OCI-LY7 (cell line): ENCODE measurements at regions of chr2 and their contacts with region 1.

Region 1: DNA sequence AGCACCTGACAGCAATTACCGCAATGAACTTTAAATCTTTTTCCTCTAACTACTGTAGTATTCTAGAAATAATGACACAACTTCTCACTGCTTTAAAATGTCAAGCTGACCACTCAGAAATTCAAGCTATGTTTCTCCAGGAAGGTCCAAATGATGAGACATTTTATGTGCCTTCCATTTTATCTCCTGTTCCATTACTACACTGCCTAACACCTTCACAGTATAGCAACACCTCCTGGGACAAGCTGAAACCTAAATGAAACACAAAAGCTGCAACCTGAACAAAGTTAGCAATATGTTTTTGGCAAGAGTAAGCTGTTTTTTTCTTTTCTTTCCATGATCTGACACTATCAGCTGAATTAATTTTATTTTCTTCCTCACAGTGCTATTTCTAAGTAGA is 81.9 kb downstream of the IKZF2 start:
- DNase-seq: no peak
- H3K4me3 ChIP-seq: no peak overlapping the region
- H3K27ac ChIP-seq: no peak overlapping the region
- H3K4me1 ChIP-seq: no peaks in the 10 kb centered on the region
- CTCF ChIP-seq: no peak

Region 2: GRCh38 chr2:213046431-213046830 is 23.1 kb before region 1 on chr2:
- CTCF ChIA-PET with region 1: no interaction called
- POLR2A ChIA-PET with region 1: interaction called, 14 read pairs
- intact Hi-C with region 1: no loop called
- DNase-seq: no peak
- H3K4me3 ChIP-seq: no peak overlapping the region
- H3K27ac ChIP-seq: no peak overlapping the region
- H3K4me1 ChIP-seq: no peaks in the 10 kb centered on the region
- CTCF ChIP-seq: no peak

Region 3: DNA sequence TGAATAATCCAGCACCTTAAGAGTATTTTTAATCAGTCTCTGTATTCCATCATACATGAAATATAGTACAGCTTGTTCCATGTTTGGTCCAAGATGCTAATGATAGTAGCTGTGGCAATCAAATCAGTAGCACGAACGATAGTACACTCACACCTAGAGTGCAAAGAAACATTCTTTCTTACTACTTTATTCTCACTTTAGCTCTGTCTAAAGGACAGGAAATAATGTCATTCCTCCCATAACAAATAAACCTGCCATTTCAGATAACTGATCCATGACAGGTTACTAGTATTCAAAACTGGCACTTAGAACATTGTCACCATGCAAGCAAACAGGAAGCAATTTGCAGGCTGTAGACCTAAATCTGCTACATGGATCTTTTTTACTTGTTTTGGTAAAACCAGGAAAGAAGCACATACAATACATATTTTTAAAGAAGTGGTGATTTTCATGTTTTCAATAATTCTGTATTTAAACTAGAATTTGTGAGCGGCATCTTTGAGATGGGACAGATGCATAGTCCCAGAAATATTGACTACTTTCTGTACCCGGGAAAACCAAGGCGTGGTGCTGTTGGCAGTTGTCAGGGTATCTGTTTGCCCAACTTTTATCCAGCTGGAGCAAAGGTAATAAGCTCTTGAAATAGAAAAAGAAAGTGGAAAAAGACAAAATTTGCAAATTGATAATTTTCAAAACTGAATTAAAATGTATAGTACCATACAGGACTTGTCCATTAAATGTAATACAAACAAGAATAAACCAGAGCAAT is 32.3 kb after region 1 on chr2:
- CTCF ChIA-PET with region 1: no interaction called
- POLR2A ChIA-PET with region 1: no interaction called
- intact Hi-C with region 1: no loop called
- DNase-seq: no peak
- H3K4me3 ChIP-seq: no peak overlapping the region
- H3K27ac ChIP-seq: no peak overlapping the region
- H3K4me1 ChIP-seq: peaks cover 9% of the 10 kb centered on the region
- CTCF ChIP-seq: no peak

Region 4: DNA sequence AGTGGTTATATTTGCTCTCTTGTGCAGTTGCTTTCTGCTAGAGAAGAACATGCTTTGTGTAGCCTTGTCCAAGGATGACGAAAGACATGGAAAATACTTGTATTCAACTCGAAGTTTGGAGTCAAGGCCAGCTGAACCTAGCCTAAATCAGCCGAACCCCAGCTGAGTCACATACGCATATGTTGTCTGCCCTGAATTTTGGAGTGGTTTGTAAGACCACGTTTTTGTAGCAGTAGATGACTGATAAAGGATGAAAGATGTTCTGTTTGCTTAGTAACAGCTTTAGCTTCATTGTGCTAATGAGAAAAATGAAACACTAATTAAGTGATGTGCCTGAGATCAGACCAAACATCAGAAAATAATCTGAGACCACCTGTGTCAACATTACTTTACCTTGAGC is 192.2 kb after region 1 on chr2:
- CTCF ChIA-PET with region 1: no interaction called
- POLR2A ChIA-PET with region 1: no interaction called
- intact Hi-C with region 1: no loop called
- DNase-seq: no peak
- H3K4me3 ChIP-seq: no peak overlapping the region
- H3K27ac ChIP-seq: no peak overlapping the region
- H3K4me1 ChIP-seq: no peaks in the 10 kb centered on the region
- CTCF ChIP-seq: no peak